Transverse colon (tissue), 4 donors: ENCODE measurements at regions of chr13 and their contacts with region 1.

Region 1: GRCh38 chr13:37049810-37050209 is 9.7 kb downstream of the SUPT20H start:
- DNase-seq: no peak
- H3K4me3 ChIP-seq: no peak overlapping the region
- H3K27ac ChIP-seq: no peak overlapping the region
- H3K4me1 ChIP-seq: peaks cover 0 to 13% (median 6%) of the 10 kb centered on the region in 4 donors
- H3K27me3 ChIP-seq: no peaks in the 10 kb centered on the region
- CTCF ChIP-seq: no peak
- EP300 ChIP-seq: no peak
- POLR2A ChIP-seq: no peak

Region 2: GRCh38 chr13:36999054-36999714 is 50.6 kb before region 1 on chr13 and contains the start of gene ALG5:
- in situ Hi-C with region 1: no loop called
- intact Hi-C with region 1: loop called (anchors 2 kb)
- DNase-seq: peak; percentile 93
- H3K4me3 ChIP-seq: peak within 1 kb of the TSS; percentile 91 to 92 (median 91)
- H3K27ac ChIP-seq: peak within 1 kb of the TSS; percentile 95 to 100 (median 96)
- H3K4me1 ChIP-seq: peaks cover 5 to 26% (median 19%) of the 10 kb centered on the region in 4 donors
- H3K27me3 ChIP-seq: no peaks in the 10 kb centered on the region
- CTCF ChIP-seq: peak; percentile 64 to 97 (median 92)
- EP300 ChIP-seq: no peak
- POLR2A ChIP-seq: peak; percentile 74
- total RNA-seq, gene ALG5: 3.8 to 33.8 (median 14.1) TPM